ENCODE measurements at regions of chr11 and their contacts with region 1.

Region 1: GRCh38 chr11:45993531-45994001 is 71.1 kb downstream of the LARGE2 start:
- DNase-seq: peak in 6 of 7 donors; percentile 25 to 72 (median 60)
- H3K4me3 ChIP-seq: no peak overlapping the region
- H3K27ac ChIP-seq: peak overlapping the region in 1 of 5 donors; percentile 4
- H3K4me1 ChIP-seq: peaks cover 16 to 25% of the 10 kb centered on the region in 2 donors
- H3K27me3 ChIP-seq: no peaks in the 10 kb centered on the region
- CTCF ChIP-seq: no peak
- POLR2A ChIP-seq: no peak

Region 2: DNA sequence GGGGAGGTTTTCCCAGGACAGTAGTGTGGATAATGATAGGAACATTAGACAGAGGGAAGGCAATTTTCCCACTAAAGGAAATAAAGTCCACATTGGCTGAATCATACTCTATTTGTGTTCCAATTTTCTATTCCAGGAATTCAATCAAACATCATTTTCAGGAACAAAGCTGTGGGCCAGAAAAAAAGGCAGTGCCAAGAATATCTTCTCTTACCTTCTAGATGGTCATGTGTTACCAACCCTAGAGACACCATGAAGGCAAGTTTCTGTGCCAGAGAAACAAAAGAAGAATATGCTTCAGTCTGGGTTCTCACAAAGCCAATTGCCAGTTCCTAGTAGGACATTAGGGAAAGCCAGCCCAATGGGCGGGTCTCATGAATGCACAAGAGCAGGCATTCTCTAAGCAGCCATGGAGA is 43.6 kb before region 1 on chr11:
- intact Hi-C with region 1: loop called in 1 of 2 experiments (anchors 10 kb)
- DNase-seq: no peak
- H3K4me3 ChIP-seq: no peak overlapping the region
- H3K27ac ChIP-seq: no peak overlapping the region
- H3K4me1 ChIP-seq: peaks cover 3 to 16% of the 10 kb centered on the region in 2 donors
- H3K27me3 ChIP-seq: no peaks in the 10 kb centered on the region
- CTCF ChIP-seq: no peak
- POLR2A ChIP-seq: no peak

Region 3: DNA sequence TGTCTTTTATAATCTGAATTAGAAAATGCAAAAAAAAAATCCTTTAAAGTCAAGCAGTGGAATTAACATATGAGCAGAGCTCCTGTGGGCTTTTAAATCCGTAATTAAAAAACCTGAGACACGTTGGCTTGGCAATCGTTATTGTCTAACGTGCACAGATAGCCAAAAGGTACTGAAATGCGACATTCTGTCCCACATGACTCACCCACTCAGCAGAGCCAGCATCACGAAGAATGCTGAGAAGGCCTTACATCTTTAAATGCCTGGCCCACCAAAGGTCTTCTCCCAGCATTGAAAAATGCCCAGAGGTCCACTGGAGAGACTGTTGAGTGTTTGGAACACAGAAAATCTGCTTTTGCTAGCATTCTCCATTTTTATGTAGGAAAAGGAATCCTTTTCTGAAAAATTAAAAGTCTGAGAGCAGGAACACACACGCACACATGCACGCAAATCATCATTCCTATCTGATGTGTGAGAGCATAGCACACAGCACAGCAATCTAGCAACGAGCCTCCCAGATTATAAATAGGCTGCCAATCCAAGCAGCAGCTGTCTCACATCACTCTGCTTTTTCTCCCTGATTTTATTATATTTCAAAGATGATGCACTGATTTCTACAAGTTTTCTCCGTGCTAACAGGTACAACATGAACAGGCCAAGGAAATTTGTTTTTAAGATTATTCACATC is 33.2 kb after region 1 on chr11:
- intact Hi-C with region 1: no loop called
- DNase-seq: peak in 3 of 7 donors; percentile 21 to 31 (median 23)
- H3K4me3 ChIP-seq: no peak overlapping the region
- H3K27ac ChIP-seq: peak overlapping the region in 2 of 5 donors; percentile 13 to 31
- H3K4me1 ChIP-seq: peaks cover 0 to 16% of the 10 kb centered on the region in 2 donors
- H3K27me3 ChIP-seq: no peaks in the 10 kb centered on the region
- CTCF ChIP-seq: no peak
- POLR2A ChIP-seq: no peak

Measured in adrenal gland (tissue), 19 donors.